ENCODE measurements at regions of chr12 and their contacts with region 1.

Region 1: GRCh38 chr12:45215419-45216229 is at the start of gene ANO6:
- DNase-seq: peak; percentile 86 to 94 (median 89)
- H3K4me3 ChIP-seq: peak within 1 kb of the TSS; percentile 73 to 95 (median 84)
- H3K27ac ChIP-seq: peak within 1 kb of the TSS; percentile 77 to 97 (median 92)
- H3K4me1 ChIP-seq: peaks cover 2 to 29% of the 10 kb centered on the region in 2 donors
- H3K27me3 ChIP-seq: no peaks in the 10 kb centered on the region
- CTCF ChIP-seq: peak in 2 of 6 experiments; percentile 5 to 33
- POLR2A ChIP-seq: peak; percentile 84 to 95
- total RNA-seq, gene ANO6: 38.2 to 92.3 (median 66.9) TPM

Region 2: GRCh38 chr12:45130881-45131281 is 84.7 kb before region 1 on chr12:
- intact Hi-C with region 1: no loop called
- DNase-seq: peak; percentile 33 to 66 (median 39)
- H3K4me3 ChIP-seq: no peak overlapping the region
- H3K27ac ChIP-seq: no peak overlapping the region
- H3K4me1 ChIP-seq: no peaks in the 10 kb centered on the region
- H3K27me3 ChIP-seq: no peaks in the 10 kb centered on the region
- CTCF ChIP-seq: peak; percentile 45 to 71 (median 60)
- POLR2A ChIP-seq: no peak

Region 3: DNA sequence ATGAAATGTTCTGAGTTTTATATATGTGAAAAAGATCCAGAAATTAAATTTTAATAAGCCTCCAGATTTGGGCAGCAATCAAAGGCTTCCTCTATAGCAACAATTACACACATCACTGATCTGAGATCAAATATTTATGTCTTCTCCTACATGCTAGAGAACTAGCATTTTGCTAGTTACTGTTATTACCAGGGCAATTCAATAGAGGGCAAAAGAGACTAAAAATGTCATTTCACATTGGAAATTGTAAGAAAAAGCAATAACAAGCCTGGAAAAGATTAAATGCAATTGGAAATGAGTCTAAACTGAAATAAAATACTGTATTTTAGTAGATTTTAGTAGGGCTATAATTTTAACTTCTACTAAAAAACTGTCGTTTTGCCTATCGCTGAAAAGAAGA is 32.4 kb before region 1 on chr12:
- intact Hi-C with region 1: no loop called
- DNase-seq: no peak
- H3K4me3 ChIP-seq: no peak overlapping the region
- H3K27ac ChIP-seq: no peak overlapping the region
- H3K4me1 ChIP-seq: no peaks in the 10 kb centered on the region
- H3K27me3 ChIP-seq: no peaks in the 10 kb centered on the region
- CTCF ChIP-seq: peak; percentile 12 to 54 (median 44)
- POLR2A ChIP-seq: no peak

Region 4: GRCh38 chr12:45268672-45269411 is 53.2 kb after region 1 on chr12:
- intact Hi-C with region 1: loop called in 1 of 2 experiments (anchors 5 kb)
- DNase-seq: peak; percentile 71 to 96 (median 90)
- H3K4me3 ChIP-seq: peak overlapping the region in 1 of 4 donors; percentile 35
- H3K27ac ChIP-seq: peak overlapping the region in 3 of 5 donors; percentile 30 to 78 (median 35)
- H3K4me1 ChIP-seq: peaks cover 8 to 35% of the 10 kb centered on the region in 2 donors
- H3K27me3 ChIP-seq: no peaks in the 10 kb centered on the region
- CTCF ChIP-seq: peak; percentile 27 to 58 (median 40)
- POLR2A ChIP-seq: no peak

Region 5: DNA sequence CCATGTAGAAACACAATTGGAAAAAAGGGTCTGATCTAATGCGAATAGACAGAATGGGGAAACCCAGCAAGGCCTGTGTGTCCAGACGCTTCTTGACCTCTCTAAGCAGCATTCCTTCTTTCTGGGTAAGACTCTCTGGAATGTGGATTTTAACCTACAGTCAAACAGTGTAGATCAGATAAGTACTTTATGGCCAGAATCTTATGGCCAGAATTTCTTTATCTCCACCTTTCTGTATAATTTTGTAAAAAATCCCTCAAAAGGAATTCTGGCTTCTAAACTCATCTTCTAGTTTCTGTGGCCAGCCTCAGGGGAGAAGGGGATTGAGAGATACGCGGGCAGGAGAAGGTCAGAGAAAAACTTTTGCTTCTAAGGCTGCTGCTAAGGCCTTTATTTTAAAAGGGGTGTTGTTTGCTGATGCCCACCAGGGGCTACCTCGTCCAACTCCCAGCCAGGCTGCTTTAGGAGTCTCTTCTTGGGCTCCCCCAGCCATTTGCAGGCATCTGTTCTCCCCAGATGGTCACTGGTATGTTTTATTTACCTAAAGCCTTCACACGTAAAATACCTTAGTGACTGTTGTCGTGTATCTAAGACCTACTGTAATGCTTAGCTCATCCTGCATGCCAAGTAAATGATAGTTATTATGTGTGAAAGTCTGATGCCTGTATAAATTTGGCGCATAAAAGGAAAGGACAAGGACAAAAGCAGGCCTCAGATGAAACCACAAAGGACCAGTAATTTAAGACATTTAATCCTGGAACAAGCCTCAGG is 68.7 kb after region 1 on chr12:
- intact Hi-C with region 1: loop called in 1 of 2 experiments (anchors 10 kb)
- DNase-seq: no peak
- H3K4me3 ChIP-seq: no peak overlapping the region
- H3K27ac ChIP-seq: peak overlapping the region in 1 of 5 donors; percentile 8
- H3K4me1 ChIP-seq: peaks cover 0 to 19% of the 10 kb centered on the region in 2 donors
- H3K27me3 ChIP-seq: no peaks in the 10 kb centered on the region
- CTCF ChIP-seq: no peak
- POLR2A ChIP-seq: no peak

Region 6: GRCh38 chr12:45337065-45337596 is 121.5 kb after region 1 on chr12:
- intact Hi-C with region 1: no loop called
- DNase-seq: no peak
- H3K4me3 ChIP-seq: no peak overlapping the region
- H3K27ac ChIP-seq: no peak overlapping the region
- H3K4me1 ChIP-seq: no peaks in the 10 kb centered on the region
- H3K27me3 ChIP-seq: no peaks in the 10 kb centered on the region
- CTCF ChIP-seq: no peak
- POLR2A ChIP-seq: no peak

Measured in adrenal gland (tissue), 19 donors.